Activated CD4-positive, alpha-beta T cell treated with anti-CD3 and anti-CD28 coated beads, Interleukin-2, amount 10 ng/mL, durations not matched to agents 7 days and 5 days (primary cell): ENCODE measurements at regions of chr1 and their contacts with region 1.

Region 1: GRCh38 chr1:111720274-111720976 is 18.8 kb downstream of the INKA2 start:
- DNase-seq: no peak
- H3K4me3 Mint-ChIP-seq: no peak overlapping the region
- H3K27ac Mint-ChIP-seq: peak overlapping the region; percentile 42
- H3K4me1 Mint-ChIP-seq: peaks cover 8% of the 10 kb centered on the region
- H3K27me3 Mint-ChIP-seq: no peaks in the 10 kb centered on the region

Region 2: DNA sequence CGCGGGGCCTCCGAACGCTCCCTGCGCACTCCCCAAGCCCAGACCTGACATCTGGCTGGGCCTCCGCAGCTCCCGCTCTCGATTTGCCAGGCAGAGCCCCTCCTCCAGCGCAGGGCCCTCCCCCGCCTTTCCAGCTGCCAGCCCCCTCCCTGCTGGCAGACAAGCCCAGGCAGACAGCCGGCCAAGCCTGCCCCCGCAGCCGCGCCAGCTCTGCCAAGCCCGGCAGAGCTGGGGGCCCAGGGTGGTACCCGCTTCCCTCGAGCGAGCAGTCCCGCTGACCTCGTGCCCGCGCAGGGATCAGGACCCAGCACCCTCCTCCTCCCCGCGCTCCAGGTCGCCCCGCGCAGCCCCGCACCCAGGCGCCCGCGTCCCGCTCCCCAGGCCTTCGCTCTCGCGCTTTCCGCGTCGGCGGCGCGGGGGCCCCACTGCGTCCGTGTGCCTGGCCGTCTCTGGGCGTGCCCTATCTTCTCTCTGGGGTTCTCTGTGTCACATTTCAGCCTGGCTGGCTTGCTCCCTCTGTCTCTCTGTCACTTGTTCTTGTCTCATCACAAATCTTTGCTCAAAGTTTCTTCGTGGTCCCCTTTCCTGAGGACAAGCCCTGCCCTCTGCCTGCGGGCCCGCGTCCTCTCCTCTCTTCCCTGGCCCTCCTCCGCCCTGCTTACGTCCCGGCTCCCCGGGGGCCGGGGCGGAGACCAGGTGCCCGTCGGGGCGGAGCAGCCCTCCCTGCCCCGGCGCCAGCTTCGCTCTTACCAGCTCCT is 18.2 kb after region 1 on chr1:
- CTCF ChIA-PET with region 1: interaction called, 13 read pairs
- POLR2A ChIA-PET with region 1: no interaction called
- DNase-seq: peak; percentile 51
- H3K4me3 Mint-ChIP-seq: peak overlapping the region; percentile 82
- H3K27ac Mint-ChIP-seq: peak overlapping the region; percentile 83
- H3K4me1 Mint-ChIP-seq: peaks cover 23% of the 10 kb centered on the region
- H3K27me3 Mint-ChIP-seq: peaks cover 37% of the 10 kb centered on the region

Region 3: GRCh38 chr1:111747282-111747734 is 26.9 kb after region 1 on chr1:
- CTCF ChIA-PET with region 1: interaction called, 14 read pairs
- POLR2A ChIA-PET with region 1: no interaction called
- DNase-seq: peak; percentile 87
- H3K4me3 Mint-ChIP-seq: no peak overlapping the region
- H3K27ac Mint-ChIP-seq: no peak overlapping the region
- H3K4me1 Mint-ChIP-seq: peaks cover 14% of the 10 kb centered on the region
- H3K27me3 Mint-ChIP-seq: peaks cover 17% of the 10 kb centered on the region

Region 4: DNA sequence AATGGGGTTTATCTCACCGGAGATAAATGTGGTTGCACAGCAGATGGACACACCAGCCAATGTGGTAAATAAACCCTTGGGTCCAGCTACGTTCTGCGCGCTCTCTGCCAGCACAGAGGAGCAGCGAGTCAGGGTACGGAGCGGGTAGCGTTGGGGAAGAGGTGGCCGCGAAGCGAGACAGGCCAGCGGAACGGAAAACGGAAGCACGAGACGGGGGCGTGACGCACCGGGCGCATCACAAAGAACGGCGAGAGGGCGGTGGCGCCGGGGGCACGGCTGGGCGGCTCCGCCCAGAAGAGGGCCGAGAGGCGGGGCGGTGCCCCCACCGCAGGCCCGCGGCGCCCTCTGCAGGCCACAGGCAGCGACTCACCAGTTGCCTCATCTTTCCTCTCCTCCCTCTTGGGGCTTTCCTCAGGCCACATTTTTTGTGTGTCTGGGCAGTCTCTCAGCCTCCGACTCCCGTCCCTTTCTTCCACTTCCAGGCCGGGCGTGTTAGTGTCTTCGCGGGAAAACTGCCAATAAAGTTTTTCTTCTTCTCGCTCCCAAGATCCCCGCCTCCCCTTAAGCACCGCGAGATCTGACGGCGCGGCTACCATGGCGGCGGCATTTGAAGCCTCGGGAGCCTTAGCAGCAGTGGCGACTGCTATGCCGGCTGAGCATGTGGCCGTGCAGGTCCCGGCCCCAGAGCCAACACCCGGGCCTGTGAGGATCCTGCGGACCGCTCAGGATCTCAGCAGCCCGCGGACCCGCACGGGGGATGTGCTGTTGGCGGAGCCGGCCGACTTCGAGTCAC is 35.1 kb after region 1 on chr1 and contains the start of gene DDX20:
- CTCF ChIA-PET with region 1: interaction called, 10 read pairs
- POLR2A ChIA-PET with region 1: no interaction called
- DNase-seq: peak; percentile 93
- H3K4me3 Mint-ChIP-seq: peak within 1 kb of the TSS; percentile 86
- H3K27ac Mint-ChIP-seq: peak within 1 kb of the TSS; percentile 96
- H3K4me1 Mint-ChIP-seq: peaks cover 49% of the 10 kb centered on the region
- H3K27me3 Mint-ChIP-seq: no peaks in the 10 kb centered on the region
- total RNA-seq, gene DDX20: 14.4 to 18.9 TPM